ENCODE measurements at regions of chr18 and their contacts with region 1.

Region 1: DNA sequence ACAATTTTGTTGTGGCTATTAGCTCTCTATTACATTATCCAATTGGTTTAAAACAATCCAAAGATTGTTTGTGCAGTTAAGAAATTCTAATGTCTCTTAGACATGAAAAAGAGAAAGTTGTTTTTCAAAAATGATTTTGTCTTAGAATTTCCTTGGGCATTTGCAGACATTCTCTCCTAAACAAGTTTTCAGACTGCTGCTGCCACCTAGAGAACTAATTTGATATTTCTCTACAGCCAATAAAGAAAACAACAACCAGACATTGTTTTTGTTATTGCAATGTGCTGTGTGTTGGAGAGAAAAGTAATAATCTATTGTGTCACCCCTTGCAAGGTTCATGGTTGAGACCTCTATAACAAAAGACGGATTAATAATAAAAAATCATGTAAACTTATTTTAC is 119.0 kb upstream of the SYT4 start:
- DNase-seq: no peak

Region 2: GRCh38 chr18:42298759-42299675 is 1097.2 kb before region 1 on chr18:
- intact Hi-C with region 1: loop called (anchors 10 kb)
- DNase-seq: peak; percentile 77 to 98 (median 88)

Region 3: DNA sequence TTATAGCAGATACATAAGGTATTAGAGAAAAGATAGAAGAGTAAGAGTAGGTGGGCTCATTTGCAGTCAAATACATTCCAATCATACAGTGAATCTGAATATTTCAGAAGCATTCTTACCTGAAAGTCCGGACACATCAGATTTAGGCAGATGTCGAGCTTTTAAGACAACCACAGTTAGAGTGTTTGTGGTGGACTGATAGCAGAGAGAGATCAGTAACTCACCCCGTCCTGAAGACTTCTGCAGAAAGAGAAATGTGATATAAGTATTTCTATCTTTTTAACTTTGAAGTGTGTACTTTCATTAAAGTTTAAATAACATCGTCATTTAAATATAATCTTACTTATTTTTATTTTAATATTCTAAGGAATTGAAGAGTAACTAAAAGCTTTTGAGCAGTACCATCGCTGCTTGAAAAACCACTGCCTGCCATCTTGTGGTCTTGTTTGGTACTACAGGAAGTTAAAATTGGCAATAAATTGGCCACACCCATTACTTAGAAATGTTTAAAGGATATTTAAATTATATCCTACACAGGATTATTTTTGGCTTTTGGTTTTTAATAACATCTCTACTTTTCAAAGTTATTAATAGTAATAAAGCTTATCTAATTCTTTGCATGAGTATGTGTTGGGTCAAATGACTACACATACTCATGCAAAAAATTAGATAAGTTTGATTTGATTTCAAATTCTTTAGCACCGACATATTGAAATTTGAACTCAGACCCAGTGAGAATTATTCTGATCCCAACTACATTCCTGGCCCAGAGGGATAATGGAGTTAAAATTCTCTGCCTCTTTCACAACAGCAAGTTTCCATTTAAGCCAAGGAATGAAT is 124.5 kb before region 1 on chr18:
- intact Hi-C with region 1: loop called (anchors 10 kb)
- DNase-seq: peak in 1 of 10 donors; percentile 43